ENCODE measurements at regions of chr12 and their contacts with region 1.

Region 1: GRCh38 chr12:122951979-122952892 is 14.0 kb downstream of the ABCB9 start:
- DNase-seq: peak; percentile 77
- ATAC-seq: peak; percentile 92 to 96

Region 2: DNA sequence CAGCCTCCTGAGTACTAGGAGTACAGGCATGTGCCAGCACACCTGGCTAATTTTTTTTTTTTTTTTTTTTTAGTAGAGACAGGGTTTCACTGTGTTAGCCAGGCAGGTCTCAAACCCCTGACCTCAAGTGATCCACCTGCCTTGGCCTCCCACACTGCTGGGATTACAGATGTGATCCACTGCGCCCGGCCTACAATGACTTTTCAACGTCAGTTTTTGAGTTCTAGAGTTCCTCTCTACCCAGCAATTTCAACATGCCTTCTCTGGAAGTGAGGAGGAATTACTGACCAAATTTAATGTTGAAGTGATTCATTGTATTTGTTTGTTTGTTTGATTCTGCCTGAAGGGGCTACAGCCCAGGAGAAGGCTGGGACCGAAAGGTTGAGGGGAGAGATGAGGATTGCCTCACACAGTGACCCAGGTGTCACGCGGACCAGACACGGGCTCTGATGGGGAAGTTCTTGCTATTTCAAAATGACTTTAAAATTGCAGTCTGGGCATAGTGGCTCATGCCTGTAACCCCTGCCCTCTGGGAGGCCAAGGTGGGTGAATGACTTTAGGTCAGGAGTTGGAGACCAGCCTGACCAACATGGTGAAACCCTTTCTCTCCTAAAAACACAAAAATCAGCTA is 208.2 kb before region 1 on chr12:
- intact Hi-C with region 1: no loop called
- DNase-seq: no peak
- ATAC-seq: no peak

Region 3: DNA sequence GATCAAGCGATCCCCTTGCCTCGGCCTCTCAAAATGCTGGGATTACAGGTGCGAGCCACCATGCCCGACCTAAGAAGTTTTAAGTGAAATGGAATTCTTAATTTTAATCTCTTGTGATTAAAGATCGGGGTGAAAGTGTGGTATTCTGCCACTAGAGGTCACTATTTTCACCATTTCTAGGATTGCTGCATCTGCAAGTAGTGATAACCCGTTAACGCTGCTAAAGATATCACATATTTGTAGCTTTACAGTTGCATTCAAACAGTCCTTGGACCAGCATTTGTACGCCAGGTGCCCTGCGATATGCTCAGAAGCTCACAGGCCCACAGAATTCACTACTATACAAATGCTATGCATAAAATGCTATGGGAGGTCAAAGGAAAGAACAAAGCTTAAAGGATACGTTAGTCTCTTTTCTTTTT is 158.5 kb before region 1 on chr12:
- intact Hi-C with region 1: loop called (anchors 5 kb)
- DNase-seq: no peak
- ATAC-seq: peak in 1 of 2 donors; percentile 65

Region 4: DNA sequence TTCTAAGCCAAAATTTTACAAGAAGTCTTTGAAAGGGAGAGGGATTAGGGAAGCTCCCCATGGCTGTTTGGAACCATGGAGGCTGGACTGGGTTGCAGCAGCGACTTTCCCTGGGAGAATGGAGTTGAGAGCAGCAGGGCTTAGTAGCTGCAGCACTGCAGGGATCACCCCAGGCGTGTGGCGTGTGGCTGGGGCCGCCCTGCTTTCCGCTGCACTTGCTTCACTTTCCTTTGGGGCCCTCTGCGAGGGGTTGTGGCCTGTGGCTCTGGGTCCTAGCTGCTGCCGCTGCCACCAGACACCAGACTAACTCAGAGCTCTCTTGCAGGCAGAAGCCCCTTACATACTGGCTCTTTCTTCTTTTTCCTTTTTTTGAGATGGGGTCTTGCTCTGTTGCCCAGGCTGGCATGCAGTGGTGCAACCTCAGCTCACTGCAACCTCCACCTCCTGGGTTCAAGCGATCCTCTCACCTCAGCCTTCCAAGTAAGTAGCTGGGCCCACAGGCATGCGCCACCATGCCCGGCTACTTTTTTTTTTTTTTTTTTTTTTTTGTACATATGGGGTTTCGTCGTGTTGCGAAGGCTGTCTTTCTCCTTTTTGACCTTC is 152.5 kb before region 1 on chr12:
- intact Hi-C with region 1: loop called (anchors 5 kb)
- DNase-seq: no peak
- ATAC-seq: no peak

Region 5: DNA sequence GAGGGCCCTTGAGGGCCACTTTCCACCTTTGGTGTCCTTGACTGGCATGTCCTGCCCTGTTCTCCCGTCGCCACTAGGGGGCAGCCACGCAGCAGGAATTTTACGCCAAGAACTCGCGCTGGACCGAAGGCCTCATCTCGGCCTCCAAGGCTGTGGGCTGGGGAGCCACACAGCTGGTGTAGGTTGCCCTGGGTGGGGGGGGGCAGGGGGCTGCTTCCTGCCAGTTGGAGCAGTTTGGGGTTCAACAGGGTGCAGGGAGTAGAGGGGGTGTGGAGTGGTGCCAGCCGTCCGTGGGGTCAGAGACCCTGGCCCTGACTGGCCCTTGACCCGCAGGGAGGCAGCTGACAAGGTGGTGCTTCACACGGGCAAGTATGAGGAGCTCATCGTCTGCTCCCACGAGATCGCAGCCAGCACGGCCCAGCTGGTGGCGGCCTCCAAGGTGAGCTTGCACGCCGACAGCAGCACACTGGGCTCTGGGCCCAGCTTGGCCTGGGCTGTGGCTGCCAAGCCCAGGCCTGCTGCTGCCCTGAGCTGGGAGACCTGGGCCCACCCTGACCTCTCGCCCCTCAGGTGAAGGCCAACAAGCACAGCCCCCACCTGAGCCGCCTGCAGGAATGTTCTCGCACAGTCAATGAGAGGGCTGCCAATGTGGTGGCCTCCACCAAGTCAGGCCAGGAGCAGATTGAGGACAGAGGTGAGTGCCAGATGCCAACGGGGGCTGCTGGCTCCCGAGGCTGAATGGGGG is 91.7 kb before region 1 on chr12:
- intact Hi-C with region 1: loop called (anchors 1 to 5 kb)
- DNase-seq: peak; percentile 89
- ATAC-seq: peak; percentile 70 to 75

Region 6: GRCh38 chr12:123106628-123107359 is 154.6 kb after region 1 on chr12:
- intact Hi-C with region 1: no loop called
- DNase-seq: peak; percentile 68
- ATAC-seq: peak; percentile 25 to 67

Measured in left cardiac atrium (tissue), 4 donors.